GM12878 (cell line): ENCODE measurements at regions of chr1 and their contacts with region 1.

Region 1: DNA sequence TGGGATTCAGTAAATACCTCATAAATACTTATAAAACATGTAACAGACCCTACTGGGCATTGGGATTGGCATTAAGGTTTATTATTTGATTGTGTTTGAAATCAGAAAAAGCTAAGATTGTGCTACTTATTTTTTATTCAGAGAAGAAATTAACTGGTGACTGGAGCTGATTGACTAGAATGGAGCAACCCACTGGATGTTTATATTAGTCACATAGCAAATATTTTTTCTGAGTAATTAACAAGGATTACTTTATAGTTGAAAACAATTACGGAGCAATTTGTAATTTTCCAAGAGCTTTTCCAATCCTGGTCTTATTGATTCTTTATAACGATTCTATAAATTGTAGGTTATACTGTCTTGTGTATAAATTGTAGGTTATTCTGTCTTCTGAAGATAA is 208.7 kb downstream of the HLX start:
- DNase-seq: no peak
- ATAC-seq: no peak
- H3K4me3 ChIP-seq: no peak overlapping the region
- H3K27ac ChIP-seq: no peak overlapping the region
- H3K4me1 ChIP-seq: no peaks in the 10 kb centered on the region
- H3K27me3 ChIP-seq: no peaks in the 10 kb centered on the region; a peak in 1 of 4 replicates
- CTCF ChIP-seq: no peak
- EP300 ChIP-seq: no peak
- POLR2A ChIP-seq: no peak
- RAD21 ChIP-seq: no peak

Region 2: DNA sequence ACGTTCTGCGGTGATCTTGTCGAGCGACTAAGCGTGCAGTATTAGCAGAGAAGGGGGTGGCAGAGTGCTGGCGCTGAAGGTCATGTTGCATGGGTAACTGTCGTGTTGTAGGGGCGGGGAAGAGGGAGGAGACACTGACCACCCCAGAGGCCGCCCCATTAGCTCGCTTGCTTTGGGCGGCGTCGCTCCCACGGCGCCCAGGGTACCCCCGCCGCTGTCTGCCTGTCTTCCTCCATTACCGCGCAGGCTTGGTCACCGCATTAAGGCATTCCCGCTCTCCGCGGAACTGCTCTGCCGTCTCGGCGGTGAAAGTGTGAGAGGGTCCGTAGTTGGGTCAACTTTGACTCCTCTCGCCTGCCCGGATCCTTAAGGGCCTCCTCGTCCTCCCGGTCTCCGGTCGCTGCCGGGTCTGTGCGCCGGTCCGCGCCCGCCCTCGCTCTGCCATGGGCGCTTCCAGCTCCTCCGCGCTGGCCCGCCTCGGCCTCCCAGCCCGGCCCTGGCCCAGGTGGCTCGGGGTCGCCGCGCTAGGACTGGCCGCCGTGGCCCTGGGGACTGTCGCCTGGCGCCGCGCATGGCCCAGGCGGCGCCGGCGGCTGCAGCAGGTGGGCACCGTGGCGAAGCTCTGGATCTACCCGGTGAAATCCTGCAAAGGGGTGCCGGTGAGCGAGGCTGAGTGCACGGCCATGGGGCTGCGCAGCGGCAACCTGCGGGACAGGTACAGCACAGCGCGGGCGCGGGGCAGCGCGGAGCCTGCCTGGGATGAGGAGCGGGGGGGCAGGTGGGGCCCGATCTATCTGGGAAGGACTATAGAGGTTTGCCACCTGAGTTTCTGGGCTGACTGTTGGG is 339.6 kb before region 1 on chr1 and contains the start of gene MTARC2:
- CTCF ChIA-PET with region 1: no interaction called
- POLR2A ChIA-PET with region 1: interaction called, 10 read pairs
- RAD21 ChIA-PET with region 1: no interaction called
- SMC1A ChIA-PET with region 1: no interaction called
- in situ Hi-C with region 1: no loop called
- intact Hi-C with region 1: no loop called
- DNase-seq: no peak
- ATAC-seq: peak; percentile 90
- H3K4me3 ChIP-seq: no peak within 1 kb of the TSS
- H3K27ac ChIP-seq: no peak within 1 kb of the TSS
- H3K4me1 ChIP-seq: no peaks in the 10 kb centered on the region
- H3K27me3 ChIP-seq: peaks cover 2 to 10% of the 10 kb centered on the region in 2 experiments; a peak in 2 of 4 replicates
- CTCF ChIP-seq: no peak
- EP300 ChIP-seq: no peak
- POLR2A ChIP-seq: peak; percentile 30; the same call in 1 of the 2 replicates
- RAD21 ChIP-seq: no peak
- polyA plus RNA-seq, gene MTARC2: 2.8 to 4.5 TPM

Region 3: DNA sequence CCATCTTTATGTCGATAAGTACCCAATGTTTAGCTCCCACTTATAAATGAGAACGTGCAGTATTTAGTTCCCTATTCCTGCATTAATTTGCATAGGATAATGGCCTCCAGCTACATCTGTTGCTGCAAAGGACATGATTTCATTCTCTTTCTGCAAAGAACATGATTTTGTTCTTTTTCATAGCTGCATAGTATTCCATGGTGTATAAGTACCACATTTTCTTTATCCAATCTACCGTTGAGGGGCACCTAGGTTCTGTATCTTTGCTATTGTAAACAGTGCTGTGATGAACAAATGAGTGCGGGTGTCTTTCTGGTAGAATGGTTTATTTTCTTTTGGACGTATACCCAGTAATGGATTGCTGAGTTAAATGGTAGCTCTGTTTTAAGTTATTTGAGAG is 145.6 kb before region 1 on chr1:
- CTCF ChIA-PET with region 1: no interaction called
- POLR2A ChIA-PET with region 1: no interaction called
- RAD21 ChIA-PET with region 1: no interaction called
- SMC1A ChIA-PET with region 1: no interaction called
- in situ Hi-C with region 1: no loop called
- intact Hi-C with region 1: no loop called
- DNase-seq: no peak
- ATAC-seq: no peak
- H3K4me3 ChIP-seq: no peak overlapping the region
- H3K27ac ChIP-seq: no peak overlapping the region
- H3K4me1 ChIP-seq: no peaks in the 10 kb centered on the region
- H3K27me3 ChIP-seq: no peaks in the 10 kb centered on the region
- CTCF ChIP-seq: no peak
- EP300 ChIP-seq: no peak
- POLR2A ChIP-seq: no peak
- RAD21 ChIP-seq: no peak

Region 4: GRCh38 chr1:221308534-221309511 is 220.9 kb after region 1 on chr1:
- CTCF ChIA-PET with region 1: no interaction called
- POLR2A ChIA-PET with region 1: no interaction called
- RAD21 ChIA-PET with region 1: no interaction called
- SMC1A ChIA-PET with region 1: no interaction called
- in situ Hi-C with region 1: no loop called
- intact Hi-C with region 1: no loop called
- DNase-seq: no peak
- ATAC-seq: no peak
- H3K4me3 ChIP-seq: no peak overlapping the region
- H3K27ac ChIP-seq: no peak overlapping the region
- H3K4me1 ChIP-seq: no peaks in the 10 kb centered on the region
- H3K27me3 ChIP-seq: no peaks in the 10 kb centered on the region
- CTCF ChIP-seq: no peak
- EP300 ChIP-seq: no peak
- POLR2A ChIP-seq: no peak
- RAD21 ChIP-seq: no peak